Activated B cell treated with CpG ODN at 0.5 μM for 24 hours (primary cell): ENCODE measurements at regions of chr18 and their contacts with region 1.

Region 1: DNA sequence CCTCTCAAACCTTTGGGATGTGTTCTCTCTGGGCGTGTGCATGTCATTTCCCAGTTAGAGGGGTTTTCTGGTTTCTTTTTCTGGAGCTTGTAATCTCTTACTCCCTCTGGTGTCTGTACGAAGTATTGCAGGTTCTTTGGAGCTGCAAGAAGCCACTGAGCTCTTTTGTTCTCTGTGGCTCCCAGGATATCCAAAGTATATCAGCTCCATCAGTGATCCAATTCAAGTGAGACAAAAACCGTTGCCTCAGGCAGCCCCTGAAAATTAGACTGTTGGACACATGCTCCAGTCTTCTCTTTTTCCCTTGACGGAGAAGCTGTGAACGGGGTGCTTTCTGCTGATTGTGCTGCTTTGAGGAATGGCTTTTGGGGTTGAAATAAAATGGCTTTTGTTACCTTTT is 59.0 kb upstream of the LDLRAD4 start:
- DNase-seq: no peak
- ATAC-seq: peak; percentile 64
- H3K4me3 Mint-ChIP-seq: no peak overlapping the region
- H3K27ac Mint-ChIP-seq: no peak overlapping the region
- H3K4me1 Mint-ChIP-seq: peaks cover 3% of the 10 kb centered on the region
- H3K27me3 Mint-ChIP-seq: no peaks in the 10 kb centered on the region
- CTCF ChIP-seq: peak; percentile 73

Region 2: DNA sequence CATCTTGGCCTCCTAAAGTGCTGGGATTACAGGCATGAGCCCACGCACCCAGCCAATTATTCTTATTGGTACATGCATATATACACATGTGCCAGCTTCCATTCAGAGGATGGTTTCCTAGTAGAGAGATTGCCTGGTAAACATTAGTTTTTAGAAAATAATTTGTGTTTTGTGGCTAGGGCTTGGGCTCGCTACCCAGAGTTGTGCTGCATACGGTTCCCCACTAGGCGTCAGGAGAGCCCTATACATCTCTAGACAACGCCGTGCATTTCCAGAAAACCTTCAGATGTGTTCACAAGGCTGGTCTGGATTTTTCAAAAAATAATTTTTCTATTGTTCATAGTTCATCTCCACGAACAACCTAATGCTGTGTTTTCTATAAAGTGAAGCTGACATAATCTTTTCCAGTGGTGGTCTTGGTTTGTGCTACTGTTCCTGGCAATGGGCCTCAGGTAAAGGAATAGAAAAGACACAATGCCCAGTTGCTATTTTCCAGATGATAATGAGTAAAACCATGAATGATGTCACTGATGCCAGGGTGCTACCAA is 767.9 kb before region 1 on chr18:
- CTCF ChIA-PET with region 1: interaction called, 6 read pairs
- POLR2A ChIA-PET with region 1: no interaction called
- intact Hi-C with region 1: loop called (anchors 1 kb)
- DNase-seq: no peak
- ATAC-seq: peak; percentile 98
- H3K4me3 Mint-ChIP-seq: no peak overlapping the region
- H3K27ac Mint-ChIP-seq: no peak overlapping the region
- H3K4me1 Mint-ChIP-seq: no peaks in the 10 kb centered on the region
- H3K27me3 Mint-ChIP-seq: peaks cover 13% of the 10 kb centered on the region
- CTCF ChIP-seq: no peak

Region 3: DNA sequence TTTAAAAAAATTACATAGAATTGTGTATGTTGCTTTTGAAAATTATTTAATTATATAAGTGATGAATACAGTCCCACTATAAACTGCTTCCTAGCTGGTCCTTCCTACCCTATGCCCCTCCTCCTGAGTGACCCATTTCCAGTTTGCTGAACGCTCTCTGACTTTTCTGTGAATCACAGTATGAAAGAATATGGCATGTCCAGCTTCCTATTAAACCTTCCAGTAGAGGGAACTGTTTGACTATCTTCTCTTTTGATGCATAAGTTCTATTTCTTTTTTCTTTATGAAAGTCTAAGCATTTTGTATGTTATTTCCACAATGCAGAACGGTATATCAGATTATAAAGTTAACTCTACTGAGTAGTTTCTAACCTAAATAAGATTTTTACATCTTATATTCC is 415.5 kb before region 1 on chr18:
- CTCF ChIA-PET with region 1: interaction called, 7 read pairs
- POLR2A ChIA-PET with region 1: no interaction called
- intact Hi-C with region 1: loop called (anchors 5 kb)
- DNase-seq: no peak
- ATAC-seq: peak; percentile 47
- H3K4me3 Mint-ChIP-seq: no peak overlapping the region
- H3K27ac Mint-ChIP-seq: no peak overlapping the region
- H3K4me1 Mint-ChIP-seq: no peaks in the 10 kb centered on the region
- H3K27me3 Mint-ChIP-seq: peaks cover 7% of the 10 kb centered on the region
- CTCF ChIP-seq: no peak

Region 4: DNA sequence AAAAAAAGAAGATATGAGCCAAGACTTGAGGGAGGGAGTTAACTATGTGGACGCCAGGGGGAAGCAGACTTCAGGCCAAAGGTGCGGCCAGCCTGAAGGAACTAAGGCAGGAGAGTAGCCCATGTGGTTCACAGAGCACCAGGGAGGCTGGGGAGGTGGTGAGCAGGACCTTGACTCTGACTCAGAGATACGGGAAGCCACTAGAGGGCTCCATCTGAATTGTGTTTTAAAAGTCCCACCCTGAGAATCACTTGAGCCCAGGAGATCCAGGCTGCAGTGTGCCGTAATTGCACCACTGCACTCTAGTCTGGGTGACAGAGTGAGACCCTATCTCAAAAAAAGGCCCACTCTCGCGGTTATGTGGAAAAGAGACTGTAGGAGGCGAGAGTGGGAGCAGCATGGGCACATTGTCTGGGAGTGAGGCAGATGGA is 156.1 kb before region 1 on chr18:
- CTCF ChIA-PET with region 1: interaction called, 13 read pairs
- POLR2A ChIA-PET with region 1: no interaction called
- intact Hi-C with region 1: loop called (anchors 1 kb)
- DNase-seq: no peak
- ATAC-seq: peak; percentile 34
- H3K4me3 Mint-ChIP-seq: no peak overlapping the region
- H3K27ac Mint-ChIP-seq: no peak overlapping the region
- H3K4me1 Mint-ChIP-seq: peaks cover 17% of the 10 kb centered on the region
- H3K27me3 Mint-ChIP-seq: no peaks in the 10 kb centered on the region
- CTCF ChIP-seq: no peak

Region 5: DNA sequence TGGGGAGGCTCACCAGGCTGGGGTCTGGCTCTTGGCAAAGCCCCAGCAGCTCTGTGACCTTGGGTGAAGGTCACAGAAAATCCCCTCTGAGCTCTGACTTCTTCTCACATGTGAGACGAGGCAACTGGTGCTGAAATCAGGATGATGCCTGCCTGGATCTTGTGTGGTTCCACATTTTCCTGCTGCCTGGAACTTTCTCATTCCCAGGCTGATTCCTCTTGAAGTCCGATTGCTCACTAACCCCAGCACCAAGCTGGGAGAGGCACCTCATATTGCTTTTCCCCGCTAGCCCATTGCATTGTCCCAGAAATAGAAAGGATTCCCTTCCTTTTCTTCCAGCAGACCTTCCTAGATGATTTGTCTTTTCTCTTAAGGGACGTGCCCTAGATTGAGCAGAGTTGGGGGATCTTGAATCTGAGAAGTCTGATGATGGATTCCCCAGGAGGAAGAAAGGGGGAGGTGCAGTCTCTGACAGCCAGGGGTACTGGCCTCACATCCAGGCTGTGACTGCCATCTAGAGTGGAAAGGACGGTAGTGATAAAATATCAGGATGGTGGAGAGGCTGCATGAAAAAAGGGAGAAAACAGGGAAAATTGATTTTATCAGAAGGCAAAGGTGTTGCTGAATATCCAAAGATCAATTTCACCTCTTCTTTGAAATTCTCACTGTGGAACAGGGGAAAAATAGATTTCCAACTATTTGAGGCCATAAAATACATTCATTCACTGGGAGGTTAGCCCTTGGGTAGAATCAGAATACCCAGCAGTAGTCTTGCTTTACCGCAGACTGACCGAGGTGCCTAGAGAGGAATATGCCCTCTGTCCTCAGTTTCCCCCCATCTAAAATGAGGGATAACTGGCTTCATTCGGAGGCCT is 470.5 kb after region 1 on chr18:
- CTCF ChIA-PET with region 1: interaction called, 5 read pairs
- POLR2A ChIA-PET with region 1: no interaction called
- intact Hi-C with region 1: loop called (anchors 1 kb)
- DNase-seq: no peak
- ATAC-seq: peak; percentile 95
- H3K4me3 Mint-ChIP-seq: peak overlapping the region; percentile 17
- H3K27ac Mint-ChIP-seq: peak overlapping the region; percentile 63
- H3K4me1 Mint-ChIP-seq: peaks cover 24% of the 10 kb centered on the region
- H3K27me3 Mint-ChIP-seq: no peaks in the 10 kb centered on the region
- CTCF ChIP-seq: peak; percentile 68

Region 6: GRCh38 chr18:13775058-13775457 is 615.5 kb after region 1 on chr18:
- CTCF ChIA-PET with region 1: no interaction called
- POLR2A ChIA-PET with region 1: no interaction called
- intact Hi-C with region 1: no loop called
- DNase-seq: no peak
- ATAC-seq: no peak
- H3K4me3 Mint-ChIP-seq: no peak overlapping the region
- H3K27ac Mint-ChIP-seq: no peak overlapping the region
- H3K4me1 Mint-ChIP-seq: no peaks in the 10 kb centered on the region
- H3K27me3 Mint-ChIP-seq: peaks cover 8% of the 10 kb centered on the region
- CTCF ChIP-seq: no peak